Activated CD4-positive, alpha-beta T cell treated with anti-CD3 and anti-CD28 coated beads for 36 hours (primary cell): ENCODE measurements at regions of chr5 and their contacts with region 1.

Region 1: GRCh38 chr5:140157032-140157803 is 17.8 kb upstream of the CYSTM1 start:
- DNase-seq: peak; percentile 94
- ATAC-seq: peak; percentile 99
- H3K4me3 Mint-ChIP-seq: peak overlapping the region; percentile 22
- H3K27ac Mint-ChIP-seq: peak overlapping the region; percentile 49
- H3K4me1 Mint-ChIP-seq: peaks cover 5% of the 10 kb centered on the region
- H3K27me3 Mint-ChIP-seq: no peaks in the 10 kb centered on the region

Region 2: DNA sequence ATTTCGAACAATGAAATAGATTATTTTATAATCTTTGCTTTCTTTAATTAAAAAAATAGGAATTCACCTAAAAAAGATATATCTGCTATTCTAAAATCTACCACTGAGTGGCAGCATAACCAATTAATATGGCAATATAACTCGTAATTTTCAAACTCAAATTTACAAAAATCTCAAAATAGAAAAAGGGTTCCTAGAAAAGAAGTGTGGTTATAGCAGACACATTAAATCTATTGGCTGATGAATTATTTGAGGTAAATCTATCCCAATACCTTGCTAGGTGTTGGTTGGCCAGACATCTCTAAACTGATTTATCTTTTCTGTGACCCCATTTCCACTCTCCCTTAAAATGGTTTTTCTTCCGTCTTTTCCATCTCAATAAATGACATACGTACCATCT is 83.9 kb before region 1 on chr5:
- CTCF ChIA-PET with region 1: interaction called, 93 read pairs
- POLR2A ChIA-PET with region 1: no interaction called
- intact Hi-C with region 1: loop called (anchors 1 kb)
- DNase-seq: no peak
- ATAC-seq: no peak
- H3K4me3 Mint-ChIP-seq: no peak overlapping the region
- H3K27ac Mint-ChIP-seq: no peak overlapping the region
- H3K4me1 Mint-ChIP-seq: no peaks in the 10 kb centered on the region
- H3K27me3 Mint-ChIP-seq: peaks cover 18% of the 10 kb centered on the region

Region 3: DNA sequence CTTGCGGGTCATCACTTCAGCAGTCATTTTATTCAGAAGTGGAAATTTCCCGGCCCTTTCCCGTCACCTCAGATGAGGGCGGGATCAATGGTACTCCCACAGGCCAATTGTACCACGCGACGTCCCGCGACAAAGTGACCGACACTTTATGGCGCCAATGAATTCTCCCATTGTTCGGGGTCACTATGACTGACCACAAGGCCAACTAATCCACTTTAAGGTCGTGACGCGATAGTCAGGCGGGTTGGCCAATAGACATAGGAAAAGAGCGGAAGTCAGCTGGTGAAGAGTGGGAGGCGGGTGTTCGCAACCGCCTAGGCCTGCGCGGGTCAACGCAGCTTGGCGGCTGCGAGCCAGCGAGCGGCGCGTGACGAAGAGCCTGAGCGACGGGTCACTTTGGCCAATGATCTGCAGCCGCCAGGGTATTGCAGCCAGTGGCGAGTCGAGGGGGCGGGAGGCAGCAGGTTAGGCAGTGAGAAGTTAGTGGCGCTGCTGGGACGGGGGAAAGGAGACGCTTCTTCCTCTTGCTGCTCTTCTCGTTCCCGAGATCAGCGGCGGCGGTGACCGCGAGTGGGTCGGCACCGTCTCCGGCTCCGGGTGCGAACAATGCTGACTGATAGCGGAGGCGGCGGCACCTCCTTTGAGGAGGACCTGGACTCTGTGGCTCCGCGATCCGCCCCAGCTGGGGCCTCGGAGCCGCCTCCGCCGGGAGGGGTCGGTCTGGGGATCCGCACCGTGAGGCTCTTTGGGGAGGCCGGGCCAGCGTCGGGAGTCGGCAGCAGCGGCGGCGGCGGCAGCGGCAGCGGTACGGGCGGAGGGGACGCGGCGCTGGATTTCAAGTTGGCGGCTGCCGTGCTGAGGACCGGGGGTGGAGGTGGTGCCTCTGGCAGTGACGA is 244.4 kb after region 1 on chr5 and contains the start of gene ANKHD1:
- CTCF ChIA-PET with region 1: no interaction called
- POLR2A ChIA-PET with region 1: no interaction called
- intact Hi-C with region 1: no loop called
- DNase-seq: peak; percentile 98
- ATAC-seq: peak; percentile 83
- H3K4me3 Mint-ChIP-seq: no peak within 1 kb of the TSS
- H3K27ac Mint-ChIP-seq: peak within 1 kb of the TSS; percentile 87
- H3K4me1 Mint-ChIP-seq: peaks cover 24% of the 10 kb centered on the region
- H3K27me3 Mint-ChIP-seq: no peaks in the 10 kb centered on the region
- total RNA-seq, gene ANKHD1: 77.1 to 93.5 TPM